IMR-90 (cell line): ENCODE measurements at regions of chr2 and their contacts with region 1.

Region 1: GRCh38 chr2:67476809-67477790 is 80.0 kb downstream of the ETAA1 start:
- DNase-seq: peak; percentile 81
- ATAC-seq: peak; percentile 69
- H3K4me3 ChIP-seq: no peak overlapping the region
- H3K27ac ChIP-seq: no peak overlapping the region
- H3K4me1 ChIP-seq: no peaks in the 10 kb centered on the region
- H3K27me3 ChIP-seq: no peaks in the 10 kb centered on the region
- CTCF ChIP-seq: peak; percentile 68
- POLR2A ChIP-seq: no peak
- RAD21 ChIP-seq: peak; percentile 81

Region 2: GRCh38 chr2:66839551-66840320 is 637.4 kb before region 1 on chr2:
- CTCF ChIA-PET with region 1: interaction called, 3 read pairs
- POLR2A ChIA-PET with region 1: no interaction called
- dilution Hi-C with region 1: no loop called
- in situ Hi-C with region 1: no loop called
- intact Hi-C with region 1: loop called (anchors 10 kb)
- DNase-seq: peak; percentile 100
- ATAC-seq: peak; percentile 93
- H3K4me3 ChIP-seq: 0 out of 2 replicates have a peak overlapping the region, but pooled peaks have one; percentile 37
- H3K27ac ChIP-seq: peak overlapping the region; percentile 89
- H3K4me1 ChIP-seq: peaks cover 11% of the 10 kb centered on the region
- H3K27me3 ChIP-seq: no peaks in the 10 kb centered on the region
- CTCF ChIP-seq: 0 out of 2 replicates have a peak, but pooled peaks have one; percentile 1
- POLR2A ChIP-seq: peak; percentile 73
- RAD21 ChIP-seq: no peak; the same call in 1 of the 2 replicates

Region 3: DNA sequence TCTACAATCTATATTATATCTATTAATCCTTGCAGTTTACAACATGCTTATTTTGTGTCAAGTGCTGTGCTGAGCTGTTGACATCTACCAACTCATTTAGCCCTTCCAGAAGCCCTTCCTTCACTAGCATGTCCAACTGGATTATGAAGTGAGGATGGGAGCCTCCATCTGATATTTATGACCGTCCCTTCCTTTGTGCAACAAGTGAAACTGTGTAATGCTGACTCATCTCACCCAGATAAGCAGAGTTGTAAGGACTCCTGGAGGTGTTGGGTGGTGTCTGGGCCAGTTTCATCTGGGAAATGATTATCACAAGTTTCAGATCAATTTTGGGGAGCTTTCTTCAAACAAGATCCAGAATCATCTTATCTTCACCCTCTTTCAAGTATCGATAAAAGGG is 236.6 kb before region 1 on chr2:
- CTCF ChIA-PET with region 1: no interaction called
- POLR2A ChIA-PET with region 1: interaction called, 5 read pairs
- dilution Hi-C with region 1: no loop called
- in situ Hi-C with region 1: loop called (anchors 10 kb)
- intact Hi-C with region 1: loop called (anchors 2 kb)
- DNase-seq: peak; percentile 53
- ATAC-seq: no peak
- H3K4me3 ChIP-seq: no peak overlapping the region
- H3K27ac ChIP-seq: no peak overlapping the region
- H3K4me1 ChIP-seq: peaks cover 5% of the 10 kb centered on the region; the same call in 1 of the 2 replicates
- H3K27me3 ChIP-seq: no peaks in the 10 kb centered on the region
- CTCF ChIP-seq: no peak
- POLR2A ChIP-seq: no peak
- RAD21 ChIP-seq: no peak

Region 4: DNA sequence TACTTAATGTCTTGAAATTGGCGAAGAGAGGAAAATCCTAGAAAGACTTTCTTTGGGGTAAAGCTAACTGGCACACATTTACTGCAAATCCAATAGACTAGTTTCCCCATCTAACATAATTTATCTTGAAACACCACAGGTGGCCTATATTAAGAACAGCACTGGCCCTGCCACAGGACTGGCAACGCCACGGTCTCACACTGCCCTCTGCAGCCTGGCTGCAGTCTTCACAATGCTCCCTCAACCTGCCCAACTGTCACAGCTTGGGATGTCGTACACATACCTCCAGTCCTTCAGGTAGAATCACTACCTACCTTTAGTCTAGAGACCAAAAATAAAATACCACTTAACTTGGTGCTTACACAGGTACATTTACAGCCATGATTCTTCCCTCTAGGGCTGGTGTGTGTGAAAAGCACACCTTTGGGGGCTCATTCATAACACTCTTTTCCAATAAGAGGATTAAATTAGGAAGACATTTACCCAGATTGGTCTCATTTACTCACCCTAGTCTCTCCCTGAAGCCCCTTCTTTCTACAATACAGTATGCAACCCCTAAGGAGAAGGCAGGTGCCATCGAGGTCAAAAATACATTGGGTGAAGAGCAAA is 363.5 kb after region 1 on chr2:
- CTCF ChIA-PET with region 1: no interaction called
- POLR2A ChIA-PET with region 1: no interaction called
- dilution Hi-C with region 1: no loop called
- in situ Hi-C with region 1: loop called (anchors 25 kb)
- intact Hi-C with region 1: loop called (anchors 2 kb)
- DNase-seq: peak; percentile 82
- ATAC-seq: peak; percentile 92
- H3K4me3 ChIP-seq: no peak overlapping the region
- H3K27ac ChIP-seq: no peak overlapping the region
- H3K4me1 ChIP-seq: peaks cover 4% of the 10 kb centered on the region; the same call in 1 of the 2 replicates
- H3K27me3 ChIP-seq: no peaks in the 10 kb centered on the region
- CTCF ChIP-seq: peak; percentile 95
- POLR2A ChIP-seq: 0 out of 2 replicates have a peak, but pooled peaks have one; percentile 36
- RAD21 ChIP-seq: peak; percentile 98

Region 5: GRCh38 chr2:69138247-69138754 is 1661.2 kb after region 1 on chr2:
- CTCF ChIA-PET with region 1: no interaction called
- POLR2A ChIA-PET with region 1: no interaction called
- dilution Hi-C with region 1: no loop called
- in situ Hi-C with region 1: no loop called
- intact Hi-C with region 1: no loop called
- DNase-seq: peak; percentile 84
- ATAC-seq: peak; percentile 78
- H3K4me3 ChIP-seq: no peak overlapping the region
- H3K27ac ChIP-seq: peak overlapping the region; percentile 57; the same call in 1 of the 2 replicates
- H3K4me1 ChIP-seq: peaks cover 2% of the 10 kb centered on the region; the same call in 1 of the 2 replicates
- H3K27me3 ChIP-seq: no peaks in the 10 kb centered on the region
- CTCF ChIP-seq: no peak
- POLR2A ChIP-seq: no peak
- RAD21 ChIP-seq: no peak